IMR-90 (cell line): ENCODE measurements at regions of chr17 and their contacts with region 1.

Region 1: GRCh38 chr17:51056813-51057510 is 63.7 kb downstream of the SPAG9 start:
- DNase-seq: peak; percentile 93
- ATAC-seq: peak; percentile 90
- H3K4me3 ChIP-seq: no peak overlapping the region
- H3K27ac ChIP-seq: peak overlapping the region; percentile 7; the same call in 1 of the 2 replicates
- H3K4me1 ChIP-seq: peaks cover 10% of the 10 kb centered on the region
- H3K27me3 ChIP-seq: no peaks in the 10 kb centered on the region
- CTCF ChIP-seq: peak; percentile 74
- POLR2A ChIP-seq: peak; percentile 55; the same call in 1 of the 2 replicates
- RAD21 ChIP-seq: peak; percentile 70

Region 2: DNA sequence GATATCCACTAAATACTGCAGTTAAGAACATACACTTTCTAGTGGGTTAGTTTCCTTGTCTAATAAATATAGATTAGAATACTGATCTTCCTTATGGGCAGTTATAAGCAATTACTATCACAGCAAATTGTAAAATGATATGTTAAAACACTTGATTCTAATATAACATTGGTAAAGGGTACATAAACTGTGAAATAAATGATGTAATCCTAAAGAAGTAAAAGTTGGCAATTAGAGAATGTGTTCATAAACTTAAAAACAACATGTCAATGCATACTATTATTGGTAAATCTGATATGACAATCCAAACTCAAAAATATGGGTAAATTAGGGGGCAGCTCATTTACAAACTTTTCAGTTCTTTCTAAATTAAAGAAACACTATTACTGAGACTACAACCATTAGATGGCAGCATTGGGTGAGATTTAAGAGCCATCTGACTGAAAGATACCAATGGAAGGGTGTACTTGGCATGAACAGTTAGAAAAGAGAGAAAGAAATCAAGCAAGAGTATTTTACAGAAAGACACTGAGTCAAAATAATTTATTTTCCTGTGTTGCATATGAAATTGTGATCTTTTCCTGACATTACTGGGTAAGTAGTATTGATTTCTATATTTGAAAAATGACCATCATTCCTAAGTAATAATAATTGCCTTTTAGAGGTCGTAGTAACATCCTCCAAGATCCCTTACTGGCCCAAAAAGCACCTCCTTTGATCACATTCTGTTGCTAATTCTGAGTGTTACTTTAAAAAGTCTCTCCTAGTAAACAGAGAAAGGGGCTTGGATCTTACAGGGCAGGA is 55.9 kb before region 1 on chr17:
- CTCF ChIA-PET with region 1: interaction called, 7 read pairs
- POLR2A ChIA-PET with region 1: no interaction called
- dilution Hi-C with region 1: no loop called
- in situ Hi-C with region 1: no loop called
- intact Hi-C with region 1: loop called (anchors 1 kb)
- DNase-seq: peak; percentile 78
- ATAC-seq: peak; percentile 59
- H3K4me3 ChIP-seq: no peak overlapping the region
- H3K27ac ChIP-seq: no peak overlapping the region
- H3K4me1 ChIP-seq: no peaks in the 10 kb centered on the region
- H3K27me3 ChIP-seq: no peaks in the 10 kb centered on the region
- CTCF ChIP-seq: peak; percentile 63
- POLR2A ChIP-seq: no peak
- RAD21 ChIP-seq: peak; percentile 76

Region 3: DNA sequence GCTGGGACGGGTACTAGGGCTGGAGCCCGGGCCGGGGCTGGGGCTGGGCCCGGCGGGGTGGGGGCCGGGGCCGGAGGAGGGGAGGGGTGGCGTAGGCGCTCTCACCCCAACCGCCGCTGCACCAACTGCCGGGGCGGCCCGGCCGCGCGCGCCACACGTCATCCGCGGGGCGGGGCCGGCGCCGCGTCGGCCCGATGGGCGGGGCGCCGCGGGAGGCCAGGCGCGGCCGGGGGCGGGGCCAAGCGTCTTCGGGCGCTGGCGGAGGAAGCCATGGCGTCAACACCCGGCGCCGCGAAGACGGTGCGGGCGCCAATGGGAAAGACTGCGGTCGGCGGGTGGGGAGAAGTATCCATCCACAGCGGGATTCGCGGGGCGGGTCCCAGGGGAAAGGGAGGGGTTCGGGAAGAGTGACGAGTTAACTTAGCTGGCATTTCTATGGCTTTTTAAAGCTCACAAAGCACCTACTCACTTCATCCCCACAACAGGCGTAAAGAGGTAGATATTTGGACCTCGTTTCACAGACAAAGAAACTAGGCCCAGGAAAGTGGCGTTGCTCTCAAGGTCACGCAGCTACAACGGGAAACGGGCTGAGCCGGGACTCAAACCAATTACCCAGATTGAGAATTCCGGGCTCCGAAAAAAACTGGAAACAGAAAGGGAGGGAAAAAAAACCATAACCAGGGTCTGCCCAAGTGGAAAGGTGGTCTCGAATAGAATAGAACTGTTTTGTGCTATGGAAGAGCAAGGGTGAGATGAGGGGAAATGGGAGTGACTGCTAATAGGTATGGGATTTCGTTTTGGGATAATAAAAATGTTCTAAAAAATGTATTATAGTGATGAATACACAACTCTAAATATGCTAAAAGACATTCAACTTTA is 64.0 kb after region 1 on chr17 and contains the start of gene SPAG9:
- CTCF ChIA-PET with region 1: interaction called, 3 read pairs
- POLR2A ChIA-PET with region 1: no interaction called
- dilution Hi-C with region 1: no loop called
- in situ Hi-C with region 1: no loop called
- intact Hi-C with region 1: loop called (anchors 2 kb)
- DNase-seq: peak; percentile 94
- ATAC-seq: peak; percentile 91
- H3K4me3 ChIP-seq: peak within 1 kb of the TSS; percentile 90
- H3K27ac ChIP-seq: peak within 1 kb of the TSS; percentile 93
- H3K4me1 ChIP-seq: peaks cover 6% of the 10 kb centered on the region
- H3K27me3 ChIP-seq: no peaks in the 10 kb centered on the region
- CTCF ChIP-seq: no peak
- POLR2A ChIP-seq: peak; percentile 96
- RAD21 ChIP-seq: no peak
- total RNA-seq, gene SPAG9: 75.5 and 93.9 TPM in 2 replicates